ENCODE measurements at regions of chr16 and their contacts with region 1.

Region 1: GRCh38 chr16:27628241-27628942 is 78.4 kb downstream of the KATNIP start:
- DNase-seq: no peak
- H3K4me3 ChIP-seq: no peak overlapping the region
- H3K4me3 Mint-ChIP-seq: no peak overlapping the region
- H3K27ac Mint-ChIP-seq: no peak overlapping the region
- H3K4me1 ChIP-seq: no peaks in the 10 kb centered on the region
- H3K4me1 Mint-ChIP-seq: peaks cover 6% of the 10 kb centered on the region
- H3K27me3 ChIP-seq: no peaks in the 10 kb centered on the region
- H3K27me3 Mint-ChIP-seq: no peaks in the 10 kb centered on the region
- CTCF ChIP-seq: no peak

Region 2: DNA sequence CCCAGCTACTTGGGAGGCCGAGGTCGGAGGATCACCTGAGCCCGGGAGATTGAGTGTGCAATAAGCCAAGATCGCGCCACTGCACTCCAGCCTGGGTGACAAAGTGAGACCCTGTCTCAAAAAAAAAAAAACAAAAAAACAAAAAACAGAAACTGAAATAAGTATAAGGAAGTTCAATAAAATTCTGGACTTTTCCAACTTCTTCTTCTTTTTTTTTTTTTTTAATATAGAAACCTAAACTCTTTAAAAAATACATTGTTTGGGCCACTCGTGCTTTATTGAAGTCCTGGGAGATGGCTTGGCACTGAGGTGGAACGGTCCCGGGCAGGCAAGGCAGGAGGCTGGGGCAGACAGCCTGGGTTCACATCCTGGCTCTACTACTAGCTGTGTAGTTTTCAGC is 41.7 kb before region 1 on chr16:
- CTCF ChIA-PET with region 1: no interaction called
- POLR2A ChIA-PET with region 1: no interaction called
- intact Hi-C with region 1: no loop called
- DNase-seq: no peak
- H3K4me3 ChIP-seq: no peak overlapping the region
- H3K4me3 Mint-ChIP-seq: no peak overlapping the region
- H3K27ac Mint-ChIP-seq: no peak overlapping the region
- H3K4me1 ChIP-seq: no peaks in the 10 kb centered on the region
- H3K4me1 Mint-ChIP-seq: no peaks in the 10 kb centered on the region
- H3K27me3 ChIP-seq: no peaks in the 10 kb centered on the region
- H3K27me3 Mint-ChIP-seq: no peaks in the 10 kb centered on the region
- CTCF ChIP-seq: no peak

Region 3: GRCh38 chr16:27611340-27611739 is 17.1 kb before region 1 on chr16:
- CTCF ChIA-PET with region 1: no interaction called
- POLR2A ChIA-PET with region 1: interaction called, 10 read pairs
- intact Hi-C with region 1: no loop called
- DNase-seq: no peak
- H3K4me3 ChIP-seq: no peak overlapping the region
- H3K4me3 Mint-ChIP-seq: no peak overlapping the region
- H3K27ac Mint-ChIP-seq: no peak overlapping the region
- H3K4me1 ChIP-seq: no peaks in the 10 kb centered on the region
- H3K4me1 Mint-ChIP-seq: peaks cover 5% of the 10 kb centered on the region
- H3K27me3 ChIP-seq: no peaks in the 10 kb centered on the region
- H3K27me3 Mint-ChIP-seq: no peaks in the 10 kb centered on the region
- CTCF ChIP-seq: no peak

Region 4: GRCh38 chr16:27892881-27893280 is 264.5 kb after region 1 on chr16:
- CTCF ChIA-PET with region 1: no interaction called
- POLR2A ChIA-PET with region 1: no interaction called
- intact Hi-C with region 1: no loop called
- DNase-seq: peak in 1 of 2 experiments; percentile 1
- H3K4me3 ChIP-seq: no peak overlapping the region
- H3K4me3 Mint-ChIP-seq: no peak overlapping the region
- H3K27ac Mint-ChIP-seq: no peak overlapping the region
- H3K4me1 ChIP-seq: no peaks in the 10 kb centered on the region
- H3K4me1 Mint-ChIP-seq: no peaks in the 10 kb centered on the region
- H3K27me3 ChIP-seq: no peaks in the 10 kb centered on the region; the same call in 1 of the 2 replicates
- H3K27me3 Mint-ChIP-seq: peaks cover 23% of the 10 kb centered on the region
- CTCF ChIP-seq: no peak